ENCODE measurements at regions of chr2 and their contacts with region 1.

Region 1: DNA sequence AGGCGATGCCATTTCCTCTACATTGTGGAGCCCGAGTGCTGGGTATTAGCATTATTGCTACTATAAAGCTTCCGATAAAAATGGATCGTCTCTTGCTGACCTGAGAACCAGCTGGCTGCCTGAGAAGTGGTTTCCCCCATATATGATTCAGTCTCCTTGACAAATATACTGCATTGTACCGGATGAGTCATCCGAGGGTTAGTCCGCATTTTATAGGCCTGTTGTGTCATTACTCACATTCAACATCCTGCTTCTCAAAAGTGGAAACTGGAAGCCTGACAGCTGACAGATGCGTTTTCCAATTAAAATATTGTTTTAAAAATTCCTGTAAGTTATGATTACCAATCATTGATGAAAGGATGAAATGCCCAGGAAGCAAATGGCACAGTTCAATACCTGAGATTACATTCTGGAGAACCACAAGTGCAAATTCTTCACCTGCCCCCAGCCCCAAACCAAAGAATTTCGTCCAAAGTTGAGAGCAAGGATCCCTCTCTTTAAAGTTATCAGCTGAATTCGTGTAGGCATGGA is 65.7 kb downstream of the SPRED2 start:
- DNase-seq: peak; percentile 63
- ATAC-seq: peak; percentile 97
- H3K4me3 Mint-ChIP-seq: no peak overlapping the region
- H3K27ac Mint-ChIP-seq: no peak overlapping the region
- H3K4me1 Mint-ChIP-seq: peaks cover 17% of the 10 kb centered on the region
- H3K27me3 Mint-ChIP-seq: peaks cover 2% of the 10 kb centered on the region

Region 2: GRCh38 chr2:65382776-65383357 is 16.2 kb after region 1 on chr2:
- CTCF ChIA-PET with region 1: interaction called, 9 read pairs
- POLR2A ChIA-PET with region 1: no interaction called
- intact Hi-C with region 1: loop called in 1 of 2 experiments (anchors 2 kb)
- DNase-seq: peak; percentile 95
- ATAC-seq: peak; percentile 90
- H3K4me3 Mint-ChIP-seq: peak overlapping the region; percentile 26
- H3K27ac Mint-ChIP-seq: peak overlapping the region; percentile 33
- H3K4me1 Mint-ChIP-seq: peaks cover 32% of the 10 kb centered on the region
- H3K27me3 Mint-ChIP-seq: peaks cover 13% of the 10 kb centered on the region